ENCODE measurements at regions of chr10 and their contacts with region 1.

Region 1: GRCh38 chr10:110304780-110305421 is at the start of gene SMNDC1:
- DNase-seq: peak; percentile 98
- ATAC-seq: peak; percentile 93
- H3K4me3 Mint-ChIP-seq: peak within 1 kb of the TSS; percentile 95
- H3K27ac Mint-ChIP-seq: peak within 1 kb of the TSS; percentile 98
- H3K4me1 Mint-ChIP-seq: peaks cover 42% of the 10 kb centered on the region
- H3K27me3 Mint-ChIP-seq: no peaks in the 10 kb centered on the region
- total RNA-seq, gene SMNDC1: 44.2 to 56.7 TPM

Region 2: DNA sequence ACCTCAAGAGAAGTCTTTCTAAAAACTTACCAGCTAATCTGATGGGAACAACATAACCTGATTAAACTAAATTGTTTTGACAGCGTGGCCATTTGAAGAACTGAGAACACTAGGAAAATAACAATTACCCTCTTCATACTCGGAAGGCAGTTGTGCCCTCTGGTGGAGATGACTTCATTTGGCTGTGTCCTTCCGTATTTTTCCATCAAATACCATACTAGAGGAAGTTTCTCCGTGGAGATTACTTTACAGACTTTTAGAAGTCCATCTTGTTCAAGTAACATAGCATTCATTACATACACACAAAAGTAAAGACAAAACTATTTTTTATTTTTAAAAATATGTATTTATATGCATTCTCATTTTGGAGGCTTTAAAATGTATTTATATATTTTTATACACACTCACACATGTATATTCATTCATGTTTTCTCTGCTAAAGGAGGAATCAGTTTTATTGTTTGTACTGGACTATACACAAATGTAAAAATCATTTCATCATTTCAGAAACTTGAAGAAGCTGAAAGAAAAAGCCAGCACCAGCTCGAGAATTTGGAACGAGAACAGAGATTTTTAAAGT is 25.4 kb before region 1 on chr10:
- CTCF ChIA-PET with region 1: interaction called, 13 read pairs
- POLR2A ChIA-PET with region 1: no interaction called
- intact Hi-C with region 1: no loop called
- DNase-seq: peak; percentile 60
- ATAC-seq: peak; percentile 51
- H3K4me3 Mint-ChIP-seq: no peak overlapping the region
- H3K27ac Mint-ChIP-seq: no peak overlapping the region
- H3K4me1 Mint-ChIP-seq: peaks cover 23% of the 10 kb centered on the region
- H3K27me3 Mint-ChIP-seq: no peaks in the 10 kb centered on the region

Region 3: GRCh38 chr10:110567201-110568054 is 262.5 kb after region 1 on chr10 and contains the start of gene SMC3:
- CTCF ChIA-PET with region 1: interaction called, 5 read pairs
- POLR2A ChIA-PET with region 1: interaction called, 4 read pairs
- intact Hi-C with region 1: loop called (anchors 1 kb)
- DNase-seq: peak; percentile 95
- ATAC-seq: peak; percentile 84
- H3K4me3 Mint-ChIP-seq: peak within 1 kb of the TSS; percentile 93
- H3K27ac Mint-ChIP-seq: peak within 1 kb of the TSS; percentile 99
- H3K4me1 Mint-ChIP-seq: peaks cover 35% of the 10 kb centered on the region
- H3K27me3 Mint-ChIP-seq: peaks cover 13% of the 10 kb centered on the region
- total RNA-seq, gene SMC3: 76.8 to 83.5 TPM

Region 4: DNA sequence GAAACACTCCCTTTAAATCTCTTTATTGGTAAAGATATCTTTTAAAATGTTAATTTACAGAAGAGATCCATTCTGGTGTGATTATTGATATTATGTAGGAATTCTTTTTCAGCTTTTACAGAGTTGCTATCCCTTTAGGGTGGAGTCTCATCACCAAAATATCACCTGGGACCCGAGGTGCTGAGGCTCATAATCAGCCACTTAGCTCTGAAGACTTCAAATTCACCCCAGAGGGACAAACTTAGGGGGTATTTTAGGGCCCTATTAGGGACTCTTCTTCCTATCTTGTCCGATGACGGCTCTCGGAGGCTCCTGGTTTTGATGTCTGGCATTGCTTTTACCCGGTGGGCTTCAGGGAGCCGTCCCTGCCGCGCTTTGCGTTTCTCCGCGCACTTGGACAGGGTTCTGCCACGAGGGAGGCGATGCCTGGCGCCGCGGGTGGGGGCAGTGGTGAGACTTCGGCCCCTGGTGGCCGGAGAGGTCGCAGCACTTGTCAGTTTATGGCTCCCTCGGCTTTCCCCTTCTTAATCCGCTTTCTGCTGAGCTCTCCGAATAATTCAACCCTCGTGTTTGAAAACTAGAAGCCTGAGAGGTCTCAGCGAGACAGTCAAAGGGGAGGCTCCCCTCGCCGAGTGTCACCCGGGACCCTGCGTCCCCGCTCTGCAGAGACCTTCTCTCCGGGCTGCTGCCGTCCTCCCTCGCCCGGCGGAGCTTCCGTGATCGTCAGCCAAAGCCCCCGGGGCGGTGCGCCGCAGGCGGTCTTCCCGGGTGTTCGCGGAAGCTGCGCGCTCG is 367.1 kb after region 1 on chr10:
- CTCF ChIA-PET with region 1: interaction called, 4 read pairs
- POLR2A ChIA-PET with region 1: no interaction called
- intact Hi-C with region 1: loop called (anchors 2 to 5 kb)
- DNase-seq: peak; percentile 86
- ATAC-seq: peak; percentile 98
- H3K4me3 Mint-ChIP-seq: peak overlapping the region; percentile 76
- H3K27ac Mint-ChIP-seq: peak overlapping the region; percentile 71
- H3K4me1 Mint-ChIP-seq: peaks cover 3% of the 10 kb centered on the region
- H3K27me3 Mint-ChIP-seq: no peaks in the 10 kb centered on the region

Region 5: DNA sequence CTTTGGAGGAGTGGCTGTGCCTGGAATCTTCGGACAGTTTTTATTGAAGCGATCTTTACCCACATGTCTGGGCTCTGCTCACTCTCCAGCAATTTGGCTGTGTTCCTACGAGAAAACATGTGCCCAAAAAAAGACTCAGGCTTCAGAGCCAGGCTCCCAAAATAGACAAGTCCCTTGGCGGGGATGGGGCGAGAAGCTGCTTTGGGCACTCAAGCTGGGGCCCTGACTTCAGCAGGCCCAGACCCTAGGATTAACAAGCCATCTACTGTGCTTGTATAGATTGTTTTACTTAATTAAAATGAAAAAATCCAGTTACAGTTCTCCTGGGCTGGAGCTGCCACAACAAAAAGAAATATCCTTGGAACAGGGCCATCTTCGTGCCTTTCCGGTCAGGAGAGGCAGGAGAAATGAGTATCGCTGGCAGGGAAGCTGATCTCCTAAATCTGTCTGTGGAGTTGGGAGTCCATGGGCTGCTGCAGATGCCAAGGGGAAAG is 515.5 kb after region 1 on chr10:
- CTCF ChIA-PET with region 1: no interaction called
- POLR2A ChIA-PET with region 1: no interaction called
- intact Hi-C with region 1: no loop called
- DNase-seq: no peak
- ATAC-seq: no peak
- H3K4me3 Mint-ChIP-seq: no peak overlapping the region
- H3K27ac Mint-ChIP-seq: no peak overlapping the region
- H3K4me1 Mint-ChIP-seq: peaks cover 25% of the 10 kb centered on the region
- H3K27me3 Mint-ChIP-seq: no peaks in the 10 kb centered on the region

Region 6: GRCh38 chr10:110883924-110884323 is 579.0 kb after region 1 on chr10:
- CTCF ChIA-PET with region 1: no interaction called
- POLR2A ChIA-PET with region 1: interaction called, 3 read pairs
- intact Hi-C with region 1: loop called in 1 of 2 experiments (anchors 10 kb)
- DNase-seq: no peak
- ATAC-seq: peak; percentile 55
- H3K4me3 Mint-ChIP-seq: peak overlapping the region; percentile 46
- H3K27ac Mint-ChIP-seq: peak overlapping the region; percentile 78
- H3K4me1 Mint-ChIP-seq: peaks cover 65% of the 10 kb centered on the region
- H3K27me3 Mint-ChIP-seq: no peaks in the 10 kb centered on the region

Measured in activated CD4-positive, alpha-beta T cell treated with anti-CD3 and anti-CD28 coated beads for 36 hours (primary cell).